ENCODE measurements at regions of chr6 and their contacts with region 1.

Region 1: DNA sequence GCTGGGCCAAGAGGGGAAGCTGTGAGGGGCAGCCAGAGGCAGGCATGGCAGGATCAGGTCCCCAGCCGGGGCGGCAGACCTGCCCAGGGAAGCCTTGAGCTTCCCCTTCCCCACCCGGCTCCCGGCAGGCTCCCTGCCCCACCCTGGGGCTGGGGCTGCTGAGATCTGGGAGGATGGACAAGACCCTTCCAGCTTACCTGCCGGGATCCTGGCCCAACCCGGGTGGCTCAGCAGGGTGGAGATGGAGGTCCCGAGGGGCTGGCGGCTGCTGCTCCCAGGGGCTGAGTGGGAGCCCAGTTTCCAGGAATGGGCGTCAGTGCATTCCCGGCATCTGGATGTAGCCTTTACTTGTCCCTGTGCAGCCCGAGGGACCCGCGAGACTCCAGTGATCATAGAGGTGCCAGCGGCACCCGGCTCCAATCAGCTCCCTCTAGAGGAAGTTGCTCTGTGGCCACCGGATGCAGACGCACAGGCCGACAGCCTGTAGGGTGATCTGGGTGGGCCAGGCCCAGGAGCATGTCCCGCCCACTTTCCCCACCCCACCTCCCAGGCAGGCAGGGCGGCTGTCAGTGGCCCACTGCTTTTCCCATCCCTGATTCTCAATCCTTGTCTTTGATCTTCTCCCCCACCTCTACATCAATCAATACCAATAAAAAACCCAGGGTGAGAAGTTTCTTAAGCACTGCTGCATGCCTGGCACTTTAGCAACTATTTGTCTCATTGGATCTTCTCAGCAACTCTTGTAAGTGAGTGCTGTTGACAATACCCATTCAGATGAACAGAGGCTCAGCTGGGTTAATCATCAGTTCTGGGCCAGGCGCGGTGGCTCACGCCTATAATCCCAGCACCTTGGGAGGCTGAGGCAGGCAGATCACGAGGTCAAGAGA is at the start of gene BAK1:
- DNase-seq: peak; percentile 95
- ATAC-seq: peak; percentile 97
- total RNA-seq, gene BAK1: 25.0 TPM

Region 2: DNA sequence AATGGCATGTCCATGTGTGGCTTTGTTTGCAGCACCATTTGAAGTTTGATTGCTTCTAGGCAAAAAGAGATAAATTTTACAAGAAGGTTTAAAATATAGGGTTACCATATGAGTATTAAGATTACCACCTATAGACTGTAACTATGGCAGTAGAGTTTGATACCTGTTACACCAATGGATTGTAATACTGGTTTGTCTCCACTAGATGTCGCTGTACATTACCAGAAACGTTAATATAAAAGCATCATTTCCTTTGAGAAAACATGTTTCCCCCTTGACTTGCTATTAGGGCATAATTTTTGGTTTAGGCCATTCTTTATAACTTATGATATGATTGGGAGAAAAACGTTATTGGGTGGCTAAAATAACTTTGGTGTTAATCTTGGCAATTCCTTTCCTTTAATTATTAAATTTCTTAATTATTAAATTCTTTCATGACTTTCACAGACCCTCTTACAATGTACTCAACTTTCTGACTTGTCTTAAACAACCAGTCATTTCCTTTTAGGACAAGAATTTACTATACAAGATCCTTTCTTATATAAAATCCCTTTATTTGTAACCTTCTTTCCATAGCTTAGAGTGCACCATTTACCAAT is 461.4 kb before region 1 on chr6:
- intact Hi-C with region 1: no loop called
- DNase-seq: no peak
- ATAC-seq: peak; percentile 46

Region 3: GRCh38 chr6:33535104-33535603 is 44.9 kb before region 1 on chr6:
- intact Hi-C with region 1: no loop called
- DNase-seq: no peak
- ATAC-seq: no peak

Region 4: DNA sequence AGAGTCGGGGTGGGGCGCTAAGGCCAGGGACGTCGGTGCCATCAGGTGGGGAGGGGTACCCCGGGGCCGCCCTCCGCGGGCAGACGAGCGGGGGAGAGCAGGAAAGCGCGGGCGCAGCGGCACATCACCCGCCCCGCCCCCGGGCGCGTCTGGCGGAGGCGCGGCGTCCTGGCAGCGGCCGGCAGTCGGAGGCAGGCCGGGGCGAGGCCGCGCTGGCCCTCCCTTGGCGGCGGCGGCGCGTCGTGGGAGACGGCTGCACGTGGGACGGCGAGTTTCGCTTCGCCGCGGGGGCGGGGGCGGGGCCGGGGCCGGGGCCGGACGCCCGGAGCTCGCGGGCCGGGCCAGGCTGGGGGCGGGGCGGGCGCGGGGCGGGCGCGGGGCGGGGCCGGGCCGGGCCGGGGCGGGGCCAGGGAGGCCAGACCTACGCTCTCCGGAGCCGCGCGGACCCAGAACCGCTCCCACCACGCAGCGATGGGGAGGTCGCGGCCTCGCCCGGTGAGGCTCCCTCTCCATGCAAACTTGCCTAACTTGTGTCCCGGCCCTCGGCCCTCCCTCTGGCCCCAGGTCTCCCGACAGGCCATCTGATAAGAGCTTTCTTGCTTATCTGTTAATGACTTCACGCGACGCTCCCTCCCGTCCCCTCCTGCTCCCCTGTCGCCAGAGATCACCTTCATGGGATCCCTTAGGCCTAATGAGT is 53.5 kb after region 1 on chr6:
- intact Hi-C with region 1: loop called (anchors 10 kb)
- DNase-seq: peak; percentile 83
- ATAC-seq: peak; percentile 86